Tibial artery (tissue), 4 donors: ENCODE measurements at regions of chr10 and their contacts with region 1.

Region 1: DNA sequence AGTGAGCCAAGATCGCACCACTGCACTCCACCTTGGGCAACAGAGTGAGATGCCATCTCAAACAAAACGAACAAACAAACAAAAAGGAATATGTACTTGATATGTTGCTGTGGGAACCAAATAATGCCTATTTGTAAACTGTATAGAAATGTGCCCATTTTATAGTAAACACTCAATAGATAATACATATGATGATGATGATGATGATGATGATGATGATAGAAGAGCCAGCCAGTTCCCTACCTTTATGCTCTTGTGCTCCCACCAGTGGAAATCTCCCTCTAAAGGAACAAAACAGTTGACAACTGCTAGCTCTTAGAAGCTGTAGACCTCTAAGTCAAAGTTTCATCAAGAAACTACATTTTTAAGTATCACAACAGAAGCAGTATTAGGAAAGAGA is 589.3 kb downstream of the ATRNL1 start:
- DNase-seq: no peak
- H3K4me3 ChIP-seq: no peak overlapping the region
- H3K27ac ChIP-seq: no peak overlapping the region
- H3K4me1 ChIP-seq: no peaks in the 10 kb centered on the region
- H3K27me3 ChIP-seq: no peaks in the 10 kb centered on the region
- CTCF ChIP-seq: no peak

Region 2: GRCh38 chr10:114703377-114704107 is 978.9 kb before region 1 on chr10:
- intact Hi-C with region 1: loop called (anchors 5 kb)
- DNase-seq: no peak
- H3K4me3 ChIP-seq: no peak overlapping the region
- H3K27ac ChIP-seq: no peak overlapping the region
- H3K4me1 ChIP-seq: no peaks in the 10 kb centered on the region
- H3K27me3 ChIP-seq: no peaks in the 10 kb centered on the region
- CTCF ChIP-seq: peak; percentile 52 to 60

Region 3: DNA sequence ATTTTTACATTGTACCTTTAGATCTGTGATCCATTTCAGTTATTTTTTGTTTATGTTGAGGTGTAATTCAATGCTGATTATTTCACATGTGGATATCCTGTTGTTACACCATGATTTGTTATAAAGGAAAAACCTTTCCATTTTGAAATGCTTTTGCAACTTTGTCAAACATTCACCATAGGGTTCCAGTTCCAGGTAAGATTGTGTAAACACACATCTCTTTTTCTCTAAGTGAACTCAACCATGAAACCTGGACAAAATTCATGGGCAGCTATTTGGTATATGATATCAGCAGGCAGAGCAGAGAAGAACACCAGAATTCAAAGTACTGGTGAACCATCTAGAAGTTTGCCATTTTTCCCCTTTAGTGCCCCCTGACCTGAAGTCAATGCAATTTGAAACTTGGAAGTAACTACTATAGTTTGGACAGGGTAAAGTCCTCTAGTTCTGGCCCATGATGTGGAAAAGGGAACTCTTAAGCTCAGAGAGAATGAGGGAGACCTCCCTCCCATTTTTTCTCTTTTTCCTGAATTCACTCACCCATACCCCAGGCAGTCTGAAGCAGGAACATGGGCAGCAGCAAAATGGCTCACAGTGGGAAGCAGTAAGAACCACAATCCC is 143.2 kb before region 1 on chr10:
- intact Hi-C with region 1: no loop called
- DNase-seq: no peak
- H3K4me3 ChIP-seq: no peak overlapping the region
- H3K27ac ChIP-seq: no peak overlapping the region
- H3K4me1 ChIP-seq: no peaks in the 10 kb centered on the region
- H3K27me3 ChIP-seq: no peaks in the 10 kb centered on the region
- CTCF ChIP-seq: no peak